GM10248 (cell line): ENCODE measurements at regions of chr16 and their contacts with region 1.

Region 1: DNA sequence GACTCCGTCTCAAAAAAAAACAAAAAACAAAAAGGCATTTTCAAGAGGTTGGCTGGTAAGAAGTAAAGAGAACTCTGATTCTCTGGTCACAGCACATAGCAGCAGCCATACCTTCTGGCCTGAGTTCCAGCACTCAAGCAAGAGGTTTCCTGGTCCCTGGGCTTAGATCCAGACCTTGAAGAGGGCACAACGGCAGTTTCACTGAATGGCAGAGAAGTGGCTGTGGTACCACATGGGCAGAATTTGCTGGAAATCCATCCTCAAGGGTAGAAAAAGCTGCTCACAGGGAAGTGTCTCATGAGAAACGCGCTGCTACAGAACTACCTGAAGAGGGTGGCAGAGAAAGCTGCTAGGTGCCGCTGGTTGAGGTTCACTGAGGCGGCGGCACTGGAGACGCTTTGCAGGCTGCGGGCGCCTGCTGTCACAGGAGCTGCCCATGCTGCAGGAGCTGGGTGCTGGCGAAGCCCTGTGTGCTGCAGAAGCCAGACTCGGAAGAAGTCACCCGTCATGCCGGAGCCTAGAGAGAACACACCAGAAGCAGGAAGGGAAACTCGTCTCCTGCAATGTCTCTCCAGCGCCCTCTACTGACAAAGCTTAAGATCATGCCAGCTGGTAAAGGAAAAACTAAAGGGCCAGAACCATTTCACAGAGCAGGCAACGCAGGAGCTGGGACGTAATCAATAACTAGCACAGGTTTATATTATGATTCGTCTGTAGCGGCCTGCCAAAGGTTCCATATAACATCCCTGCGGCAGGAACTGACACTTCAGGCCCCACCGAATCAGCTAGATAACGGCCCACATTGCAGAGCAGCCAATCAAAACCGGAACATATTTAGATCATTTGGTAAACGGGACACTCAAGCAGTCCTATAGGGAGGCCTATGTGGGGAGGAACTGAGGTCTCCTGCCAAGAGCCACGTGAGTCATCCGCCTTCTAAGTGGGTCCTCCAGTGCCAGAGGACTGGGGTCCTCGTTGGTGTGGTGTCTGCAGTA is 5.4 kb upstream of the ZNF213 start:
- DNase-seq: peak; percentile 65
- CTCF ChIP-seq: peak; percentile 88

Region 2: DNA sequence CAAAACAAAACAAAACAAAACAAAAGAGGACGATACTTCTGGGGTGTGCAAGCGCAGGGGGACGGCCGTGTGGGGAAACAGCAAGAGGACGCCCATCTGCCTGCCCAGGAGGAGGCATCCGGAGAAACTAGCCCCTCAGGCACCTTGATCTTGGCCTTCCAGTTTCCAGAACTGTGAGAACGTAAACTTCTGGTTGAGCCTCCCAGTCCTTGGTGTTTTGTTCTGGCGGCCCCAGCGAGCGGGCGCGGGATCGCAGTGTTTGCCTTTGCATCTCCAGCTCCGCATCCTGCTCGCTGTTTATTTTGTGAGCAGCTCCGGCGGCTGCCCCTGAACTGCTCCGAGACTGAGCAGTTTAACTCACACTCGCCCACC is 84.1 kb before region 1 on chr16:
- CTCF ChIA-PET with region 1: interaction called, 11 read pairs
- POLR2A ChIA-PET with region 1: no interaction called
- DNase-seq: no peak
- CTCF ChIP-seq: no peak

Region 3: GRCh38 chr16:3074860-3075522 is 54.4 kb before region 1 on chr16:
- CTCF ChIA-PET with region 1: interaction called, 25 read pairs
- POLR2A ChIA-PET with region 1: no interaction called
- DNase-seq: peak; percentile 65
- CTCF ChIP-seq: no peak

Region 4: DNA sequence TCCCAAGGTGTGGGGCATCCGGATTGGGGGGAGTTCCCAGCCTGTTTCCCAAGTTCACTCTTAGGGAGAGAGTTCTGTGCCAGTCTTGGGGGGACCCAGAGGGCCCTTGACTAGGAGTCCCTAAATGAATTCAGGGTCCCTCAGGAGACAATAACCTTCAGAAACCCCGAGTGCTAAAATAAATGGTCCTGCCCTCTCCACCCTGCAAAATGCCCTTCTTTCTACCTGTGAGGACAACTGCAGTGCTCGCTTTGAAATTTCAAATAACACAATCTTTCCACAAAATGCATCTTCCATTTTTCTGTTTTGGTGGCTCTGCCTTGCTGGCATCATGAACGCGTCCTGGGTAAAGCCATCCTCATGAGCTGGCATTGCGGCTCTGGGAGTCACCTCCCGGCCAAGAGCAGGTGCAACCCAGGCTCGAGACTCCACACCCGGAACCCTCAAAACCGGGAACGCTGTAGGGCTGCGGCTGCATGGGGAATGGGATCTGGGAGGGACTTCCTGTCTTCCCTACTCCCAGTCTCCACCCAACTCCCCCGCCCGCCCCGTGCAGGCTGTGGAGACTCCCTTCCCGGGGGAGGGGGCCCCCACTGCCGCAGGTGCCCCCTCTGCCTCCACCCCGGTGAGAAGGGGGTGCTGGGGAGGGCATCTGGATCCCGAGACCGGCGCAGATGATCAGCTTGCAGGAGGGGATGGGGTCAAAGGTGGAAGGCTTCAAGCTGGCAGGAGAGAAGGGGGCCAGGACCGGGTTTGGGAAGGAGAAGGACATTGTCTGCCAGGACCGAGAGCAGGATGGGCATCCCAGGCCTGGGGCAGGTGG is 17.2 kb before region 1 on chr16 and contains the start of gene ZNF205:
- CTCF ChIA-PET with region 1: interaction called, 246 read pairs
- POLR2A ChIA-PET with region 1: no interaction called
- DNase-seq: no peak
- CTCF ChIP-seq: no peak

Region 5: GRCh38 chr16:3173892-3174617 is 44.6 kb after region 1 on chr16:
- CTCF ChIA-PET with region 1: interaction called, 76 read pairs
- POLR2A ChIA-PET with region 1: interaction called, 3 read pairs
- DNase-seq: peak; percentile 59
- CTCF ChIP-seq: peak; percentile 38